ENCODE measurements at regions of chr1 and their contacts with region 1.

Region 1: DNA sequence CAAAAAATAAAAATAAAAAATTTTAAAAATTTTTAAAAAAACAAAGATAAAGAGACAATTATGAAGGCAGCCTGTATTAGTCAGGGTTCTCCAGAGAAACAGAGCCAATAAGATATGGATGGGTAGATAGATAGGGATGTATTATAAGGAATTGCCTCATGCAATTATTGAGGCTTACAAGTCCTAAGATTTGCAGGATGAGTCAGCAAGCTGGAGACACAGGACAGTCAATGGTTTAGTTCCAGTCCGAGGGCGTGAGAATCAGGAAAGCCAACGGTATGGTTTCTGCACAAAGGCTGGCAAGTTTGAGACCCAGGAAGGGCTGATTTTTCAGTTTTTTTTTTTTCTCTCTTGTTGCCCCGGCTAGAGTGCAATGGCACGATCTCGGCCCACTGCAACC is 24.1 kb upstream of the EIF4G3 start:
- DNase-seq: no peak
- ATAC-seq: no peak
- H3K4me3 ChIP-seq: no peak overlapping the region
- H3K4me3 Mint-ChIP-seq: no peak overlapping the region
- H3K27ac ChIP-seq: no peak overlapping the region
- H3K27ac Mint-ChIP-seq: no peak overlapping the region
- H3K4me1 ChIP-seq: no peaks in the 10 kb centered on the region
- H3K4me1 Mint-ChIP-seq: no peaks in the 10 kb centered on the region
- H3K27me3 ChIP-seq: no peaks in the 10 kb centered on the region
- H3K27me3 Mint-ChIP-seq: peaks cover 8% of the 10 kb centered on the region
- CTCF ChIP-seq: no peak

Region 2: GRCh38 chr1:20696397-20697329 is 504.1 kb before region 1 on chr1:
- CTCF ChIA-PET with region 1: interaction called, 130 read pairs
- POLR2A ChIA-PET with region 1: no interaction called
- intact Hi-C with region 1: no loop called
- DNase-seq: peak; percentile 83
- ATAC-seq: peak; percentile 94
- H3K4me3 ChIP-seq: peak overlapping the region; percentile 42 to 82 (median 79)
- H3K4me3 Mint-ChIP-seq: peak overlapping the region; percentile 91
- H3K27ac ChIP-seq: no peak overlapping the region
- H3K27ac Mint-ChIP-seq: no peak overlapping the region
- H3K4me1 ChIP-seq: peaks cover 0 to 8% of the 10 kb centered on the region in 2 donors
- H3K4me1 Mint-ChIP-seq: peaks cover 4% of the 10 kb centered on the region
- H3K27me3 ChIP-seq: no peaks in the 10 kb centered on the region
- H3K27me3 Mint-ChIP-seq: no peaks in the 10 kb centered on the region
- CTCF ChIP-seq: peak; percentile 98

Region 3: DNA sequence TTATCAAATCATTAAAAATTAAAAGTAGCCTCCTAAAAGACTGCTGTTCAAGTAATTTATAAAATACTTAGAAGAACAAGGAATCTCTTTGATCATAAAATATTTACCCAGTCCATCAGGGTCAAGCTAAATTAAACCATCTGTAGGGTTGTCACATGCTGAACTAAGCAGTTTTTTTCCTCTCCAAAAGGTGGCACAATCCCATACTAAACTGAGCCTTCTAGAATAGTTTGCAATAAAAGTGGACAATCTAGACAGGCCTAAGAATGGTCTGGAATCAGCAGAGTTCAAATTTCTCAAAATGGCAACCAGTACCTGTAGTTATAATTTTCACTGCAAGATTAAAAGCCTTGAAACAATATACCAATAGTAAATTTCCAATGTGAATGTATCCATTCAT is 218.9 kb before region 1 on chr1:
- CTCF ChIA-PET with region 1: interaction called, 94 read pairs
- POLR2A ChIA-PET with region 1: no interaction called
- intact Hi-C with region 1: loop called (anchors 1 kb)
- DNase-seq: no peak
- ATAC-seq: no peak
- H3K4me3 ChIP-seq: no peak overlapping the region
- H3K4me3 Mint-ChIP-seq: no peak overlapping the region
- H3K27ac ChIP-seq: peak overlapping the region in 1 of 2 donors; percentile 41
- H3K27ac Mint-ChIP-seq: no peak overlapping the region
- H3K4me1 ChIP-seq: no peaks in the 10 kb centered on the region
- H3K4me1 Mint-ChIP-seq: no peaks in the 10 kb centered on the region
- H3K27me3 ChIP-seq: no peaks in the 10 kb centered on the region
- H3K27me3 Mint-ChIP-seq: no peaks in the 10 kb centered on the region
- CTCF ChIP-seq: no peak

Region 4: GRCh38 chr1:21022279-21023040 is 178.3 kb before region 1 on chr1:
- CTCF ChIA-PET with region 1: interaction called, 10 read pairs
- POLR2A ChIA-PET with region 1: no interaction called
- intact Hi-C with region 1: no loop called
- DNase-seq: peak; percentile 58
- ATAC-seq: peak; percentile 91
- H3K4me3 ChIP-seq: peak overlapping the region in 3 of 5 experiments; percentile 7 to 46 (median 17)
- H3K4me3 Mint-ChIP-seq: peak overlapping the region; percentile 88
- H3K27ac ChIP-seq: peak overlapping the region; percentile 0 to 74
- H3K27ac Mint-ChIP-seq: peak overlapping the region; percentile 96
- H3K4me1 ChIP-seq: peaks cover 10 to 11% of the 10 kb centered on the region in 2 donors
- H3K4me1 Mint-ChIP-seq: peaks cover 17% of the 10 kb centered on the region
- H3K27me3 ChIP-seq: no peaks in the 10 kb centered on the region
- H3K27me3 Mint-ChIP-seq: no peaks in the 10 kb centered on the region
- CTCF ChIP-seq: no peak

Region 5: GRCh38 chr1:21082073-21082472 is 118.7 kb before region 1 on chr1:
- CTCF ChIA-PET with region 1: no interaction called
- POLR2A ChIA-PET with region 1: no interaction called
- intact Hi-C with region 1: no loop called
- DNase-seq: no peak
- ATAC-seq: no peak
- H3K4me3 ChIP-seq: no peak overlapping the region
- H3K4me3 Mint-ChIP-seq: no peak overlapping the region
- H3K27ac ChIP-seq: no peak overlapping the region
- H3K27ac Mint-ChIP-seq: no peak overlapping the region
- H3K4me1 ChIP-seq: no peaks in the 10 kb centered on the region
- H3K4me1 Mint-ChIP-seq: peaks cover 6% of the 10 kb centered on the region
- H3K27me3 ChIP-seq: no peaks in the 10 kb centered on the region
- H3K27me3 Mint-ChIP-seq: no peaks in the 10 kb centered on the region
- CTCF ChIP-seq: no peak

Region 6: DNA sequence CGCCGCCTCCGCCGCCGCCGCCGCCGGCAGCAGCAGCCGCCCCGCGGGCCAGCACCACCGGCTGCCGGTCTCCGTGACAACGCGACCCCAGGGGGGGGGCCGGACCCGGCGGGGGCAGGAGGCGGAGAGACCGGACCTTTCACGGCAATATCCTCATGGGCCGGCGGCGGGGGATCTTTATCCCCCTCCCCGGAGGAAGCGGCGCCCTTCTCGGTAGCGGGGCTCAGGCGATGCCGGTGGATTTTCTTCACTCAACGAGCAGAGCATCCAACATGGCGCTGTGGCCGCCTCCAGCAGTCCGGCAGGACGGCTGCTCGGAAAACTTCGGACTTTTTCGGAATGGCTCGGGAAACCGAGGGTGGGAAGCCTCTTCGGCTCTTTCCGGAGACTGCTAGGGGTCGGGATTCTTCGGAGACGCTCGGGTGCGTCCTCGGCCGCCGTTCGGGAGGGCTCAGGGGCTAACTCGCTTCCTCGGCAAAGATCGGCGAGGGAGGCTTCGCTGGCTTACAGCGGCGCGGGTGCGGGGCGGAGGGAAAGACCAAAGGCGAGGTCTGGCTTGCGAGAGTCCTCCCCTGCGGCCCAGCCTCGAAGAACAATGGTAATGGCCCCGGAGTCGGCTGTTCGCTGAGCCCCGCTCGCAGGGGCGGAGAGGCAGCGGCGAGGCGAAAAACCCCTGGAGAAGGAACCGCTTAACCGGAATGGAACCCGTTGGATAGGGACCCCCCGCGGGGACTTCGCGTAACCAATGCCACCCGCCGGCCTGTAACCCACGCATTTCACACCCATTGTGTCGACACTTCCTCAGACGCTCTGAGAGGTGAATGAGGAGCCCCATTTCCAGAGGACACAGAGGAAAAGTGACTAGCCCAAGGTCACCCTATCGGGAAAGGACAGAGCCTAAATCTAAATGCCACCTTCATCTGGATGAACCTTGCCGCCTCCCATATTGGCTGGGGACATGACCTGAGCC is 23.9 kb before region 1 on chr1 and contains the start of gene EIF4G3:
- CTCF ChIA-PET with region 1: interaction called, 20 read pairs
- POLR2A ChIA-PET with region 1: no interaction called
- intact Hi-C with region 1: no loop called
- DNase-seq: peak; percentile 99
- ATAC-seq: peak; percentile 93
- H3K4me3 ChIP-seq: peak within 1 kb of the TSS; percentile 76 to 96 (median 83)
- H3K4me3 Mint-ChIP-seq: peak within 1 kb of the TSS; percentile 97
- H3K27ac ChIP-seq: peak within 1 kb of the TSS; percentile 73 to 89
- H3K27ac Mint-ChIP-seq: peak within 1 kb of the TSS; percentile 96
- H3K4me1 ChIP-seq: peaks cover 16 to 23% of the 10 kb centered on the region in 2 donors
- H3K4me1 Mint-ChIP-seq: peaks cover 29% of the 10 kb centered on the region
- H3K27me3 ChIP-seq: no peaks in the 10 kb centered on the region
- H3K27me3 Mint-ChIP-seq: no peaks in the 10 kb centered on the region
- CTCF ChIP-seq: no peak
- total RNA-seq, gene EIF4G3: 76.0 and 80.9 TPM in 2 replicates

Region 7: GRCh38 chr1:21184276-21184675 is 16.5 kb before region 1 on chr1:
- CTCF ChIA-PET with region 1: interaction called, 45 read pairs
- POLR2A ChIA-PET with region 1: no interaction called
- intact Hi-C with region 1: no loop called
- DNase-seq: peak; percentile 70
- ATAC-seq: peak; percentile 91
- H3K4me3 ChIP-seq: no peak overlapping the region
- H3K4me3 Mint-ChIP-seq: peak overlapping the region; percentile 59
- H3K27ac ChIP-seq: peak overlapping the region; percentile 30 to 77
- H3K27ac Mint-ChIP-seq: peak overlapping the region; percentile 87
- H3K4me1 ChIP-seq: peaks cover 33 to 37% of the 10 kb centered on the region in 2 donors
- H3K4me1 Mint-ChIP-seq: peaks cover 23% of the 10 kb centered on the region
- H3K27me3 ChIP-seq: no peaks in the 10 kb centered on the region
- H3K27me3 Mint-ChIP-seq: no peaks in the 10 kb centered on the region
- CTCF ChIP-seq: no peak

Region 8: DNA sequence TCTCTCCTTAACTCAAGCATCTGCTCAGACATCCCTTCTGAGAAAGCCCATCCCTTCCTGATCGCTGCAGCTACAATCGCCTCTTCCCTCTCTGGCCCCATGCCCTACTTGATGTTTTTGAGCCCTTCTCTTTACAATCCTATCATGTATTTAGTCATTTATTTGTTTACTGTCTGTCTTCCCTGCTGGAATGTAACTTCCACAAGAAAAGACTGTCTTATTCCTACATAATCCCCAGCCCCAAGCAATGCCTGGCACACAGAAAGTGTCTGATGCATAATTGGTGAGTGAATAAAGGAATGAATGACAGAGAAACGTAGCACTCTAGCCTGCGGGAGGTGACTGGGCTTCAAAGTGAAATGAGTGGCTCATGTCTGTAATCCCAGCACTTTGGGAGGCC is 64.1 kb after region 1 on chr1:
- CTCF ChIA-PET with region 1: no interaction called
- POLR2A ChIA-PET with region 1: no interaction called
- intact Hi-C with region 1: no loop called
- DNase-seq: no peak
- ATAC-seq: no peak
- H3K4me3 ChIP-seq: no peak overlapping the region
- H3K4me3 Mint-ChIP-seq: no peak overlapping the region
- H3K27ac ChIP-seq: no peak overlapping the region
- H3K27ac Mint-ChIP-seq: no peak overlapping the region
- H3K4me1 ChIP-seq: no peaks in the 10 kb centered on the region
- H3K4me1 Mint-ChIP-seq: peaks cover 14% of the 10 kb centered on the region
- H3K27me3 ChIP-seq: no peaks in the 10 kb centered on the region
- H3K27me3 Mint-ChIP-seq: no peaks in the 10 kb centered on the region
- CTCF ChIP-seq: no peak

Measured in B cell (primary cell).